CD4-positive, alpha-beta memory T cell (primary cell): ENCODE measurements at regions of chr20 and their contacts with region 1.

Region 1: DNA sequence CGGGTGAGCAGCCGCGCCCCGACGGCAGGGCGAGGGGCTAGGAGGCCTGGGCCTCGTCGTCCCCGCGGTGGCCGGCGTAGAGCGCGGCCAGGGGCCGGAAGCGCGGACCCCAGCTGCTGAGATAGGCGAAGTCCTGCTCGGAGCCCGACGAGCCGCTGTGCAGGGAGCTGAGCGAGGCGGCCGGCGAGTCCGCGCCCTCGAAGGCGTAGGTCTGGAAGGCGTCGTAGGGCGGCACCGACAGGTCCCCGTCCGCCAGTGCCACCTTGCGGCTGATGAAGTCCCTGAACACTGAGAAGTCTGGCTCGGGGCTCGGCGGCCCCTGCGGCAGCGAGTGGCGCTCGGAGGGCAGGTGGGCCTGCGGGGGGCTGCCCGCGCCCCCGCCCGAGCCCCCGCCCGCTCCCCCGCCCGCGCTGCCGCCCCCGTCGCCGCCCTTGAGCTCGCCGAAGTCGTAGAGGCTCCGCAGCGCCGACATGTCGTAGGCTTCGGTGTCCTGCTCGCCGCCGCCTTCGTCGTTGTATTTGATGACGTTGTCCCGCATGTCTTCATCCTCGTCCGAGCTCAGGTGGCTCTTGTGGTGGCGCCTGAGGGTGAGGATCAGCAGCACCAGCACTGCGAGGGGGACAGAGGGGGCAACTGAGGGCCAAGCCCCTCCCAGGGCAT is 56.5 kb downstream of the CD40 start:
- DNase-seq: peak; percentile 58 to 61 (median 60)
- H3K4me3 ChIP-seq: no peak overlapping the region
- H3K4me3 Mint-ChIP-seq: peak overlapping the region in 1 of 8 donors; percentile 46
- H3K27ac ChIP-seq: no peak overlapping the region
- H3K27ac Mint-ChIP-seq: no peak overlapping the region
- H3K4me1 ChIP-seq: peaks cover 3% of the 10 kb centered on the region
- H3K4me1 Mint-ChIP-seq: peaks cover 0 to 9% (median 3%) of the 10 kb centered on the region in 4 donors
- H3K27me3 ChIP-seq: peaks cover 24% of the 10 kb centered on the region
- H3K27me3 Mint-ChIP-seq: peaks cover 33 to 42% of the 10 kb centered on the region in 2 donors

Region 2: GRCh38 chr20:46013826-46014516 is 160.6 kb before region 1 on chr20:
- CTCF ChIA-PET with region 1: interaction called, 32 read pairs
- POLR2A ChIA-PET with region 1: no interaction called
- intact Hi-C with region 1: loop called (anchors 2 kb)
- DNase-seq: peak; percentile 59 to 82 (median 64)
- H3K4me3 ChIP-seq: peak overlapping the region in 1 of 2 donors; percentile 33
- H3K4me3 Mint-ChIP-seq: peak overlapping the region; percentile 45 to 81 (median 64)
- H3K27ac ChIP-seq: no peak overlapping the region
- H3K27ac Mint-ChIP-seq: peak overlapping the region in 3 of 7 donors; percentile 54 to 78 (median 57)
- H3K4me1 ChIP-seq: peaks cover 50% of the 10 kb centered on the region
- H3K4me1 Mint-ChIP-seq: peaks cover 25 to 67% (median 45%) of the 10 kb centered on the region in 4 donors
- H3K27me3 ChIP-seq: peaks cover 30% of the 10 kb centered on the region
- H3K27me3 Mint-ChIP-seq: peaks cover 26 to 61% of the 10 kb centered on the region in 2 donors

Region 3: DNA sequence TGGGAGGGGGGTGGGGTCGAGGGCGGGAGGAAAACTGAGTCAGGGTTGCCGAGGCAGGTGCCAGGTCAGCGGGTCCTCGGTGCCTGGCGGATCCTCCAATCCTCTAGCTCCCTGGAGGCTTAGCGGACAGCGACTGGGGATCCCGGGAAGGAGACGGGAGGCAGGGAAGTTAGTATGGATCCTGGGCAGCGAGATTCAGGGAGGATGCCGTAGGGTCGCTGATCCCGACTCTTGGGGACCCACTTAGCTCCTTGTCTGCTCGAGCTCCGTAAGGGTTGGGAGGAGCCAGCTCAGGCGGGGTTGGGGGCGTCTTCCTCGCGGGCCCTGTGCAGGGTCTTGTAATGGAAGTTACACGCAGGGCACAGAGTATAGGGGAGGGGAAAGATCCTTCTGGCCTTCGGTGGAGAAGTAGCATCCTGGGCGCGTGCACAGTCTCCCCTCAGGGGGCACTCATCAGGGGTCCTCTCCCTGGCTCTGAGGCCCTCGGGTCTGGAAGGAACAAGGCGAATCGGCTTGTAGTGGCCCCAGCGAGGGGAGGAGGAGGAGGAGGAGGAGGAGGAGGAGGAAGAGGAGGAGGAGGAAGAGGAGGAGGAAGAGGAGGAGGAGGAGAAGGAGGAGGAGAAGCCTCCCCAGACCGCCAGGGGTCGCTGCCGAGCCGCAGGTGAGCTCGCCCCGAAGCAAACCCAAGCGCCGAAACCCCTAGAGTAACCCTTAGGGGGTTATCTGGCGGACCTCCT is 152.0 kb before region 1 on chr20:
- CTCF ChIA-PET with region 1: interaction called, 22 read pairs
- POLR2A ChIA-PET with region 1: interaction called, 3 read pairs
- intact Hi-C with region 1: no loop called
- DNase-seq: peak; percentile 59 to 73 (median 62)
- H3K4me3 ChIP-seq: peak overlapping the region; percentile 19 to 57
- H3K4me3 Mint-ChIP-seq: peak overlapping the region; percentile 16 to 82 (median 64)
- H3K27ac ChIP-seq: no peak overlapping the region
- H3K27ac Mint-ChIP-seq: no peak overlapping the region
- H3K4me1 ChIP-seq: peaks cover 16% of the 10 kb centered on the region
- H3K4me1 Mint-ChIP-seq: peaks cover 10 to 30% (median 12%) of the 10 kb centered on the region in 4 donors
- H3K27me3 ChIP-seq: peaks cover 27% of the 10 kb centered on the region
- H3K27me3 Mint-ChIP-seq: peaks cover 25 to 48% of the 10 kb centered on the region in 2 donors

Region 4: GRCh38 chr20:46132705-46133120 is 41.9 kb before region 1 on chr20:
- CTCF ChIA-PET with region 1: interaction called, 4 read pairs
- POLR2A ChIA-PET with region 1: no interaction called
- intact Hi-C with region 1: loop called (anchors 1 kb)
- DNase-seq: peak in 4 of 5 donors; percentile 39 to 49 (median 42)
- H3K4me3 ChIP-seq: no peak overlapping the region
- H3K4me3 Mint-ChIP-seq: peak overlapping the region in 1 of 8 donors; percentile 38
- H3K27ac ChIP-seq: no peak overlapping the region
- H3K27ac Mint-ChIP-seq: peak overlapping the region in 1 of 7 donors; percentile 53
- H3K4me1 ChIP-seq: no peaks in the 10 kb centered on the region
- H3K4me1 Mint-ChIP-seq: peaks cover 0 to 9% (median 3%) of the 10 kb centered on the region in 4 donors
- H3K27me3 ChIP-seq: no peaks in the 10 kb centered on the region
- H3K27me3 Mint-ChIP-seq: peaks cover 24 to 42% of the 10 kb centered on the region in 2 donors

Region 5: GRCh38 chr20:46188866-46189541 is 14.4 kb after region 1 on chr20:
- CTCF ChIA-PET with region 1: interaction called, 10 read pairs
- POLR2A ChIA-PET with region 1: no interaction called
- intact Hi-C with region 1: no loop called
- DNase-seq: no peak
- H3K4me3 ChIP-seq: no peak overlapping the region
- H3K4me3 Mint-ChIP-seq: no peak overlapping the region
- H3K27ac ChIP-seq: no peak overlapping the region
- H3K27ac Mint-ChIP-seq: no peak overlapping the region
- H3K4me1 ChIP-seq: no peaks in the 10 kb centered on the region
- H3K4me1 Mint-ChIP-seq: peaks cover 0 to 2% (median under 1%) of the 10 kb centered on the region in 4 donors
- H3K27me3 ChIP-seq: no peaks in the 10 kb centered on the region
- H3K27me3 Mint-ChIP-seq: peaks cover 0 to 25% of the 10 kb centered on the region in 2 donors

Region 6: GRCh38 chr20:46206025-46206424 is 31.4 kb after region 1 on chr20:
- CTCF ChIA-PET with region 1: interaction called, 15 read pairs
- POLR2A ChIA-PET with region 1: no interaction called
- intact Hi-C with region 1: no loop called
- DNase-seq: no peak
- H3K4me3 ChIP-seq: no peak overlapping the region
- H3K4me3 Mint-ChIP-seq: peak overlapping the region in 4 of 8 donors; percentile 45 to 72 (median 62)
- H3K27ac ChIP-seq: no peak overlapping the region
- H3K27ac Mint-ChIP-seq: peak overlapping the region in 6 of 7 donors; percentile 18 to 94 (median 83)
- H3K4me1 ChIP-seq: peaks cover 42% of the 10 kb centered on the region
- H3K4me1 Mint-ChIP-seq: peaks cover 29 to 47% (median 42%) of the 10 kb centered on the region in 4 donors
- H3K27me3 ChIP-seq: no peaks in the 10 kb centered on the region
- H3K27me3 Mint-ChIP-seq: peaks cover 6 to 24% of the 10 kb centered on the region in 2 donors

Region 7: DNA sequence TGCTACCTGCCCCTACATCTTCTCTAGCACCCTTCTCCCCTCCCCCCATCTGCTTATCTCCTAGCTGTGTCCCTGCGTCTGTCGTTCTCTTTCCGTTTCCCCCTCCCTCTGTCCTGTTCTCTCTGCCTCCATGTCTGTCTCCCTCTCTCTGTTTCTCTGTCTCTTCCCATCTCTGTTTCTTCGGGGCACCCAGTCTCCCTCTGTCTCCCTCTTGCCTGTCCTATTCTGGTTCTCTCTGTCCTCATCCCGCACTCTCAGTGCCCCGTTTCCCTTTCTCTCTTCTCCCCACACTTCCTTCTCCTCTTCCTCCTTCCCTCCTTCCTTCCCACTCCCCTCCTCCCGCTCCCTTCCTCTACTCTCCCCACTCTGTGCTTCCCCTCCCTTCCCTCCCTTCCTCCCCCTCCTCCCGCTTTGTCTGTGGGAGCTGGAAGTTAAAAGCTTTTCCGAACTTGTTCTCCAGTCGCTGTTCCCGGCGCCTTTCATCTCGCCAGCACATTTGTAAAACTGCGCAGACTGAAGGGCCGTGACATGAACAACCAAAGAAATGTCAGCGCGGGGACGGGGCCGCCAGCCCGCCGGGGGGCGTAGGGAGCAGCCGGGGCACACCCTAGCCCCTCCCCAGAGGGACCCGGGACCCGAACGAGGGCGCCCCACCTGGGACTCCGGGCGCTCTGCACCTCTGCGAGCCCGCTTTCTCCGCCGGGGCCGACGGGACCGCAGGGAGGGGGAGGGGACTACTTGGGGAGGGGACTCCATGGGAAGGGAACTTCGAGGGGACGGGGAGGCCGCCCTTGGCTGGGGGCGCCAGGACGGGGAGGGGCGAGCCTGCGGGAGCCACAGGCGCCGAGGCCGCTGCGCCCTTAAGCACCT is 137.7 kb after region 1 on chr20:
- CTCF ChIA-PET with region 1: no interaction called
- POLR2A ChIA-PET with region 1: no interaction called
- intact Hi-C with region 1: no loop called
- DNase-seq: no peak
- H3K4me3 ChIP-seq: no peak overlapping the region
- H3K4me3 Mint-ChIP-seq: peak overlapping the region in 6 of 8 donors; percentile 7 to 79 (median 38)
- H3K27ac ChIP-seq: no peak overlapping the region
- H3K27ac Mint-ChIP-seq: peak overlapping the region in 1 of 7 donors; percentile 4
- H3K4me1 ChIP-seq: peaks cover 14% of the 10 kb centered on the region
- H3K4me1 Mint-ChIP-seq: peaks cover 7 to 23% (median 12%) of the 10 kb centered on the region in 4 donors
- H3K27me3 ChIP-seq: peaks cover 48% of the 10 kb centered on the region
- H3K27me3 Mint-ChIP-seq: peaks cover 69 to 70% of the 10 kb centered on the region in 2 donors